ENCODE measurements at regions of chr3 and their contacts with region 1.

Region 1: GRCh38 chr3:51682079-51682478 is 11.0 kb downstream of the TEX264 start:
- DNase-seq: peak; percentile 63
- H3K4me3 ChIP-seq: no peak overlapping the region
- CTCF ChIP-seq: peak; percentile 84

Region 2: DNA sequence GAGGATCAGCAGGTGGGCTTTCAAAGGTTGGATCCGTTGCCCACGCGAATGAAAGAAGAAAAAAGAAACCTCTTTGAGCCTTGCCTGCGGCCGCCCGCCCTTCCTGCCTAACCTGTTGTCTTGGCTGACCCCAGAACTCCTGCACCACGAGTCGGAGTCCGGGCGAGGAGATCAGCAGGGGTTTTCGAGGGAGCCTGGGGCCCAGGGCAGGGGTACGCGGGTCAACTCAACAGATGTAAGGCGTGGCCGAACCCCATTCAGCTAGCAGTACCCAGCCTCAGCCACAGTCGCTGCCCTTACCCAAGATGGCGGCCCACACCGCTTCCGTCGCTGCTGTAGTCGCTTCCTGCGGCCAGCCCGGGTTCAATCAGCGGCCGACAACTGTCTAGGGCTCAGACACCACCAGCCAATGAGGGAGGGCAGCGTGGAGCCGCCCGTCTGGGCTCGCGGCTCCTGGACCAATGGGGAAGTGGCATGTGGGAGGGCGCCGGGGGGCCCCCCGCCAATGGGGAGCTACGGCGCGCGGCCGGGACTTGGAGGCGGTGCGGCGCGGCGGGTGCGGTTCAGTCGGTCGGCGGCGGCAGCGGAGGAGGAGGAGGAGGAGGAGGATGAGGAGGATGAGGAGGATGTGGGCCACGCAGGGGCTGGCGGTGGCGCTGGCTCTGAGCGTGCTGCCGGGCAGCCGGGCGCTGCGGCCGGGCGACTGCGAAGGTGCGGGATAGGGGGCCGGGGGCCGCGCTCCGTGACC is 297.2 kb before region 1 on chr3 and contains the start of gene MANF:
- CTCF ChIA-PET with region 1: interaction called, 84 read pairs
- POLR2A ChIA-PET with region 1: no interaction called
- DNase-seq: peak; percentile 87
- H3K4me3 ChIP-seq: peak within 1 kb of the TSS; percentile 96
- CTCF ChIP-seq: no peak

Region 3: GRCh38 chr3:51511000-51511399 is 171.1 kb before region 1 on chr3:
- CTCF ChIA-PET with region 1: interaction called, 10 read pairs
- POLR2A ChIA-PET with region 1: no interaction called
- DNase-seq: no peak
- H3K4me3 ChIP-seq: no peak overlapping the region
- CTCF ChIP-seq: no peak

Region 4: GRCh38 chr3:51637941-51638471 is 44.1 kb before region 1 on chr3:
- CTCF ChIA-PET with region 1: interaction called, 60 read pairs
- POLR2A ChIA-PET with region 1: no interaction called
- DNase-seq: no peak
- H3K4me3 ChIP-seq: no peak overlapping the region
- CTCF ChIP-seq: peak; percentile 85

Region 5: DNA sequence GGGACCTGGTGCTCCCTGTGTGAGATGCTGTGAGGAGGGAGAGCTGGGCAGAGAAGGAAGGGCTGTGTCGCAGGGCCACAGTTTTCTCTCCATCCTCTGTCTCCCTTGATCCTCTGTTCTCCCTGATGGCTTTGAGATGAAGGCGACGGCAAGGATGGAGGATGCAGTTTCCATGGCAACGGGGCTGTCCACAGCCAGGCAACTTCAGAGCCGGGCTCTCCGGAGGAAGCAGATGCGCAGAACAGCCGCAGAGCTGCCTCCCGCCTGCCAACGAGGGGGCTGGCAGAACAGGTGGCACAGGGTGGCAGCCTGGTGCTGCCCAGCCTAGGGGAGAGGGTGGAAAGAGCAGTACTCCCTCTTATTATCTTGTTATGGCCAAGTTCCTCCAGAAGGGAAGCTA is 14.9 kb after region 1 on chr3:
- CTCF ChIA-PET with region 1: interaction called, 28 read pairs
- POLR2A ChIA-PET with region 1: no interaction called
- DNase-seq: no peak
- H3K4me3 ChIP-seq: no peak overlapping the region
- CTCF ChIP-seq: no peak

Region 6: GRCh38 chr3:51706788-51707731 is 25.0 kb after region 1 on chr3 and contains the start of gene GRM2:
- CTCF ChIA-PET with region 1: interaction called, 13 read pairs
- POLR2A ChIA-PET with region 1: no interaction called
- DNase-seq: no peak
- H3K4me3 ChIP-seq: peak within 1 kb of the TSS; percentile 42
- CTCF ChIP-seq: peak; percentile 4

Region 7: DNA sequence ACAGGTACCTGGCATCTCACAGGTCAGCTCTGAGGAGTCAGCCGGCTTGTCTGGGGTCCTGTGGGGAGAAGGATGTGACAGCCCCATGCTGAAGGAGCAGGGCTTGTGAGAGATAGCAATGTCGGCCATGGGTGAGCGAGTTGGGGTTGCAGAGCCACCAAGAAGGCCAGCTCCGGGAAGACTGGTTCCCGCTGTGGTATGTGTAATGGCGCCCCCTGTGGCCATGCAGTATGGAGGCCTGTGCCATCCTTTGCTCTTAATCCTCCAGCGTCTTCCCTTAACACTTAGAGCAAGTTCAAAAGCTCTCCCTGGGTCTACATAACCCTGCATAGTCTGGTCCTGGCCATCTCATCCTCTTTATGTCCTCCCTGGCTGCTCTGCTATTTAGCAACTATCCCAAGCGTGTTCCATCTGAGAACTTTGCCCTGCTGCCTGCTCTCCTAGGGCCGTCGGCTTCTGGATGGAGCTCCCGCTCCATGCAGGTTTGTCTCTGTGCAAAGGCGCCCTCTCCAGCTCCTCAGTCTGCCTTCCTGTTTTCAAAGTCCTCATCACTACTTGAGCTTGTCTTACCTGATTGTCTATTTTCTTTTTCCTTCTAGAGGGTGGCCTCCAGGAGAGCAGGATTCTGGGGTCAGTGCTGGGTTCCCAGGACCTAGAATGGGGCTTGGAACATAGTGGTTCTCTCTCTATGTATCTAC is 137.8 kb after region 1 on chr3:
- CTCF ChIA-PET with region 1: no interaction called
- POLR2A ChIA-PET with region 1: no interaction called
- DNase-seq: no peak
- H3K4me3 ChIP-seq: no peak overlapping the region
- CTCF ChIP-seq: no peak

Region 8: DNA sequence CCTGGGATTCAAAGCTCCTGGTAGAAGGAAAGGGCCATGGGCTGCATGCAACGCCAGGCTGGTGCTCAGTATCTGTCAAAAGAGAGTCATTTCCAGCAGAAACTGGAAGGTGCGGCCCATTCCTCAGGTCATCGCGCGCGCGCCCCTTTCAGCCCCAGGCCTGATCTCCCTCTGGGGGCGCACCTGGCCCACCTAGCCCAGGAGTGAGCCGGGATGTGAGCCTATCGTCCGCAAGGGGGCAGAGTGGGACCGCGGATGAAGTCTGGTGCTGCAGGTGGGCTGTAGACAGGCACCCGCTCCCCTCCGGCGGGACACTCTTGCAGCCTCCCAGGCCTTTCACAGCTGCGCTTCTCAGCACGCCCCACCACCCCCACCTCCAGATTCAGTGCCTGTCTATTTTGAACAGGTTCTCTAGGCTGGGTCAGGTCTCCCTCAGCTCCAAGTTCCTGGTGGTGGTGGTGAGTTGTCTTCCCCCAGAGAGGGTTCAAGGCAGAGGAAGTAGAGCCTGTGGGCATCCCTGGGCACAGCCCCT is 319.4 kb after region 1 on chr3:
- CTCF ChIA-PET with region 1: no interaction called
- POLR2A ChIA-PET with region 1: no interaction called
- DNase-seq: no peak
- H3K4me3 ChIP-seq: no peak overlapping the region
- CTCF ChIP-seq: peak; percentile 96

Region 9: GRCh38 chr3:52022323-52023100 is 340.4 kb after region 1 on chr3:
- CTCF ChIA-PET with region 1: no interaction called
- POLR2A ChIA-PET with region 1: no interaction called
- DNase-seq: no peak
- H3K4me3 ChIP-seq: no peak overlapping the region
- CTCF ChIP-seq: no peak

Region 10: GRCh38 chr3:52596658-52597265 is 914.7 kb after region 1 on chr3:
- CTCF ChIA-PET with region 1: no interaction called
- POLR2A ChIA-PET with region 1: no interaction called
- DNase-seq: no peak
- H3K4me3 ChIP-seq: no peak overlapping the region
- CTCF ChIP-seq: no peak

Measured in AG04449 (cell line).